MCF 10A (cell line): ENCODE measurements at regions of chrX and their contacts with region 1.

Region 1: GRCh38 chrX:68828740-68829552 is at the start of gene EFNB1:
- DNase-seq: peak; percentile 94
- H3K4me3 Mint-ChIP-seq: peak within 1 kb of the TSS; percentile 77
- H3K27ac Mint-ChIP-seq: peak within 1 kb of the TSS; percentile 91
- H3K4me1 Mint-ChIP-seq: peaks cover 10% of the 10 kb centered on the region
- H3K27me3 Mint-ChIP-seq: peaks cover 33% of the 10 kb centered on the region
- CTCF ChIP-seq: no peak
- total RNA-seq, gene EFNB1: 38.9 and 42.9 TPM in 2 replicates

Region 2: DNA sequence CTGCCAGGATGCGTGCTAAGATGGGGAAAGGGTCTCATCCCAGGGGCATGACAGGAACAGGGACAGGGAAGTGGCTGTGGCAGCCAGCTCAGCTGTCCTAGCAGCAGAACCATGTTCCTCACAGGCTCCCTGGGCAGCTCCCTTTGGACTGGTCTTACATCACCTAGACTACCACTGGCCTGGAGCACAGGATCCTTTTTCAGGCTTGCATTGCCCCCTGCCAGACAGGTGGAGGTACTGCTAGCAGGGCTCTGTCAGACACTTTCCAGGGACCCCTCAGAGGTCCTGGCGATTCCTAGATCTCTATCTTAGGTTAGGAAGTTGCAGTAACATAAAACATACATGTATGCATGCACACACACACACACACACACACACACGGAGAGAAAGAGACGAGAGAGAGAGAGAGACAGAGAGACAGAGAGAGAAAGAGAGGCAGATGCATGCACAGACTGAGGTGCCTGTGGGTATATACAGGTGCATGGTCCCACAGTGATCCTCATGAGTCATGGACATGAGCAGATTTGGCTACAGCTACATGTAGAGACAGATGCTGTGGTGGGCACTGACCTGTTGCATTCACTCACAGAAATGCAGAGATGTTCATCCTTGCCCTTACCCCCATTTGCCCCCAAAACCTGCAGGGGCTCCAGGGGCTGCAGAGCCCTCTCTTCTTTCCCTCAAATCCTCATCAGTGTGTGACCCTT is 117.9 kb before region 1 on chrX:
- CTCF ChIA-PET with region 1: no interaction called
- POLR2A ChIA-PET with region 1: no interaction called
- intact Hi-C with region 1: no loop called
- DNase-seq: peak; percentile 59
- H3K4me3 Mint-ChIP-seq: no peak overlapping the region
- H3K27ac Mint-ChIP-seq: no peak overlapping the region
- H3K4me1 Mint-ChIP-seq: no peaks in the 10 kb centered on the region
- H3K27me3 Mint-ChIP-seq: peaks cover 55% of the 10 kb centered on the region
- CTCF ChIP-seq: peak; percentile 72

Region 3: GRCh38 chrX:68754406-68754805 is 74.5 kb before region 1 on chrX:
- CTCF ChIA-PET with region 1: no interaction called
- POLR2A ChIA-PET with region 1: no interaction called
- intact Hi-C with region 1: no loop called
- DNase-seq: no peak
- H3K4me3 Mint-ChIP-seq: no peak overlapping the region
- H3K27ac Mint-ChIP-seq: no peak overlapping the region
- H3K4me1 Mint-ChIP-seq: no peaks in the 10 kb centered on the region
- H3K27me3 Mint-ChIP-seq: peaks cover 47% of the 10 kb centered on the region
- CTCF ChIP-seq: no peak

Region 4: GRCh38 chrX:68894513-68895340 is 65.8 kb after region 1 on chrX:
- CTCF ChIA-PET with region 1: interaction called, 3 read pairs
- POLR2A ChIA-PET with region 1: interaction called, 19 read pairs
- intact Hi-C with region 1: loop called (anchors 2 kb)
- DNase-seq: peak; percentile 47
- H3K4me3 Mint-ChIP-seq: no peak overlapping the region
- H3K27ac Mint-ChIP-seq: no peak overlapping the region
- H3K4me1 Mint-ChIP-seq: no peaks in the 10 kb centered on the region
- H3K27me3 Mint-ChIP-seq: peaks cover 53% of the 10 kb centered on the region
- CTCF ChIP-seq: no peak

Region 5: DNA sequence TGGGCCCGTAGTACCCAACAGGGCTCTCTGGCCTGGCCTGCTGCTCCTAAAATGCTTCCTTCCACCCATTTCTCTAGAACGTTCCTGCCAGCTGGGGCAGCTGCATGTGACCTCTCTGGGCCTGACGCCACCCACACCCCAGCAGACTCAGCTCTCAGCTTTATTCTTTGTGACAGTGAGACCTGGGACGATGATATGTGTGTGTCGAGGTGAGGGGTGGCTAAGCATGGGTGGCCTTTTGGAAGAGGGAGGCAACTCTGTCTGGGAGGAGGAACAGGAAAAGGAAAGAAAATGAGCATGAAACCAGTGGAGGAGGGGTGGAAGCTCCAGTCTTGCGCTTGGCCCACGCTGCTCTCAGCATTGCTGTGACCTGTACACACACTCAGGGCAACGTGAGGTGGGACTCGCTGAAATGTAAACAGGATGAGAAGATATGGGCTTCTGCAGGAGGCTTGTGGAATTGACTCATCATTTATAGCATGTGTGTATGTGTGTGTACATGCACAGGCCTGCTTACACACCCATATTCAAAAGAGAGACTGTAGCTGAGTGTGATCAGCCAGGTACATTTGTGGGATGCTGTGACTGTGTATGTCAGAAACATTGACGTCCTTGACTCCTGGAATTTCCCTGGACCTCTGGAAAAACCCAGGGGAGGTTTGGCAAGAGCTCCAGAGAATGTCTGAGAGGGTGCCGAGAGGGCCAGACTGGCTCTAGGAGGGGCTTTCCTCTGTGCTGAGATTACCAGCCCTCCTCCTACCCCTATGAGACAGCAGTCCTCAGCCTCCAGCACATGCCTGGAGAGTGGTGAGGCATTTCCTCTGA is 198.4 kb after region 1 on chrX:
- CTCF ChIA-PET with region 1: interaction called, 33 read pairs
- POLR2A ChIA-PET with region 1: interaction called, 38 read pairs
- intact Hi-C with region 1: loop called (anchors 1 kb)
- DNase-seq: peak; percentile 65
- H3K4me3 Mint-ChIP-seq: no peak overlapping the region
- H3K27ac Mint-ChIP-seq: peak overlapping the region; percentile 17
- H3K4me1 Mint-ChIP-seq: peaks cover 28% of the 10 kb centered on the region
- H3K27me3 Mint-ChIP-seq: peaks cover 47% of the 10 kb centered on the region
- CTCF ChIP-seq: no peak

Region 6: DNA sequence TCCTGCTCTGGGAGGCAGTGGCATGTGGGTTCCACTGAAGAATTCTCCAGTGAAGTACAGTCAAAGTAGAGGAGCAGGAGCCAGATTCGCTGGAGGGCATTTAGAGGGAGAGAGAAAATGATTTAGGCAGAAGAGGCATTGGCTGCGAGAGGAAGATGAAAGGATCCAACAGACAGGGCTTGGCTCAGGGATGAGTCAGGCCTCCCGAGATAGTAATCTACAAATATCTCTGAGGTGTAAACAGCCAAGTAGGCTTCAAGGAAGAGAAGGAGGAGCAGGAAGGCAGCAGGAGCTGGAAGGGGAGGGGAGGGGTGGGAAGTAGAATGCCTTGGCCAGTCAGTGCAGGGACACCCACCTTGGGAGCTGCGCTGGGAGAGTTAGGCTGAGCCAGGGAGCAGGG is 280.7 kb after region 1 on chrX:
- CTCF ChIA-PET with region 1: interaction called, 3 read pairs
- POLR2A ChIA-PET with region 1: interaction called, 11 read pairs
- intact Hi-C with region 1: no loop called
- DNase-seq: peak; percentile 88
- H3K4me3 Mint-ChIP-seq: no peak overlapping the region
- H3K27ac Mint-ChIP-seq: no peak overlapping the region
- H3K4me1 Mint-ChIP-seq: peaks cover 14% of the 10 kb centered on the region
- H3K27me3 Mint-ChIP-seq: peaks cover 58% of the 10 kb centered on the region
- CTCF ChIP-seq: no peak

Region 7: DNA sequence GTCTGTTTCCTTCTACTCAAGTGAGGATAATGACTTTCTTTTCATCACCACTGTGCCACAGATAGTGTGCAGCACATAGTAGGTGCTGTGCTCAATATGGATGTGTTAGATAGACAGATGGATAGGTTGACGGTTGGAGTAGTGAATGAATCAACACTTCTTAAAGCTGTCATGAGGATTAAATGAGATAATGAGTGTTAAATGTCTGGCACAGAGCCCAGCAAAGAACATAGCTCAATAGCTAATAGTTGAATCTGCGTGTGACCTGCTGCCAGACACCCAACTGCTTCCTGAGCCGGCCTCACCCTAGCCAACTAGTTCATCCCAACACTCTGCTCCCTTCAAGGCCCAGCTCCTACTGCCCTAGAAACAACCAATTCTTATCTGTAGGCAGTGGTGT is 404.0 kb after region 1 on chrX:
- CTCF ChIA-PET with region 1: interaction called, 12 read pairs
- POLR2A ChIA-PET with region 1: no interaction called
- intact Hi-C with region 1: no loop called
- DNase-seq: peak; percentile 23
- H3K4me3 Mint-ChIP-seq: no peak overlapping the region
- H3K27ac Mint-ChIP-seq: no peak overlapping the region
- H3K4me1 Mint-ChIP-seq: no peaks in the 10 kb centered on the region
- H3K27me3 Mint-ChIP-seq: peaks cover 34% of the 10 kb centered on the region
- CTCF ChIP-seq: no peak